ENCODE measurements at regions of chr1 and their contacts with region 1.

Region 1: DNA sequence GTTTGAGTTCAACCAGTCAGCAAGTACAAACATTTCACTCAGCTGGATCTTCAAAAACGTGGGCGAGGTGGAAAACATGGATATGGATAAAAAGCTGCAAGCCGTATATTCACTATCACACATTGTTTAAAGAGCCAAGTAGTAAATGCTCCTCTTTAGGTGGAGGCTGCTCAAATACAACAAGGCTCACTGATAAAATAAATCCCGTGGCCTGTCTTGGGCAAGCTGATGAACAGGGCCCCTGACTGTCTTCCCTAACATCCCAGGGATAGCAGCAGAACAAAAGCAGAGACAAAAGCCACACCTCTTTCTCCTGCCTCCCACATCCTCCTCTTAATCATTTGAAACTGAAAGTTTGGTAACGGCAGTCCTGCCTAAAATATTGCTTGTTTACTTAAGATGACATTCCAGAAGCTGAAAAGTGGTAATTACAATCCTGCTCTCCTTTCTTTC is 357.7 kb downstream of the TTLL7 start:
- DNase-seq: peak in 1 of 2 donors; percentile 22
- ATAC-seq: peak in 6 of 8 donors; percentile 54 to 88 (median 74)
- H3K4me3 ChIP-seq: peak overlapping the region in 3 of 10 donors; percentile 4 to 26 (median 22)
- H3K27ac ChIP-seq: peak overlapping the region in 9 of 10 donors; percentile 5 to 79 (median 37)
- H3K4me1 ChIP-seq: peaks cover 0 to 20% (median 10%) of the 10 kb centered on the region in 9 donors
- H3K27me3 ChIP-seq: no peaks in the 10 kb centered on the region
- CTCF ChIP-seq: no peak

Region 2: DNA sequence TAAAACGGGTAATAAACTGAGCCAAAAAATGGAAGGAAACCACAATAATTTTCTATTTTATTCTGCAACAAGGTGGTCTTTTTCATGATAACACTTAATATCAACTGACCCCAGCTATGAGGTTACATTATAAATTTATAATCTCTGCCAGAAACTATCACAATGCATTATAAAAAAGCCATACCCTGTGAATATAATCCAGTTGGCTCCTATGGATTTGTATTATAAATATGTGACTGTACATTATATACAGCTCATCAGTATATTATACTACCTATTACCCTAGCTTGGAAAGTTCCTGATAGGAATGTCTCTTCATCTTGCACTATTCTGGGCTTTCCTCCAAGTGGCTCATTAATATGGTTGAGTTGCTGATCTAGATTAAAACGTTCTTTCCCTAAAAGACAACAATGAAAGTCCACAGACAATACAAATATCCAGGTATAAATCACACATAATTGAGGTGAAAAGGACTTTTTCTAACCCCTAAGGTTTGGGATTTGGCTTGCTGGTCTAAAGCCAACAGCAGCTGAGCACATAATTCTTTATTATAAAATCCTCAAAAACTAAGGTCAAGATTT is 130.0 kb before region 1 on chr1:
- intact Hi-C with region 1: loop called in 1 of 10 experiments (anchors 5 kb)
- DNase-seq: no peak
- ATAC-seq: no peak
- H3K4me3 ChIP-seq: no peak overlapping the region
- H3K27ac ChIP-seq: peak overlapping the region in 2 of 10 donors; percentile 44 to 76
- H3K4me1 ChIP-seq: peaks cover 3 to 62% (median 35%) of the 10 kb centered on the region in 9 donors
- H3K27me3 ChIP-seq: no peaks in the 10 kb centered on the region
- CTCF ChIP-seq: no peak

Region 3: DNA sequence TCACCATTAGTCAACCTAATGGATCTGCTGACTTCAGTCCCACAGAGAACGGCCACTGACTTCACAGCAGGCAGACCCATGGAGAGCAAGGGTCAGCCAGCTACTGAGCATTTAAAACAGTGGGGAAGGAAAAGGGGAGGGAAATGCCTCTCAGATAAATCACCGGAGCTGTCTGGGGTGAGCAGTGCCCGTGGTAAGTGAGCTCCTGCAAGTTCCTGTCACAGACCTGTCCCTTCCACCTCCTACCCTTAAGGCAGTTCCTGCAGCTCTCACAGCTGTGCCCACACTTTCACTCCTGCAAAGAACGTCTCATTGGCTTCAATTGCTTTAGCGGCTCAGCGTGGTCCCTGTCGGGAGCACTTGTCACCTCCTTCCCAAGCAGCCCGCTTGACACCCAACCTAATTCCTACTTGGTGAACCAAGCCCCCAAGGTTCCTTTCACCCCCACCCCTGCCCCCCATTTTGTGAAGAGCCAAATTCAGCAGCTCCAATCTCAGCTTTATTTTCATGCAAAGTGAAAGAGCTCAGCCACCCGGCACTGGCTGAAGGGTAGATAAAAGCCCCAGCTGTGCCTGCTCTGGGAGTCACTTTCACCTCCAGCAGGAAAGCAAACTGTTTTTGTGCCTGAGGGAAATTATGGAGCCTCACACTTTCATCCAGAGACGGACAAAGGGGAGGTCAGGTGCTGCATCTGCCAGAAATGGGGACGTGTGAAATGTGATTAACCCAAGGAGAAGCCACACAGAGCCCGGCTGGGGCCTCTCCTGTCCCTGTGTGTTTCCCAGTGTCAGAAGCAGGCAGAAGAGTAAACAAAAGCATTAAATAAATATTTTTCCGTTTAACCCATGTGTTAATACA is 51.5 kb after region 1 on chr1:
- intact Hi-C with region 1: loop called in 1 of 10 experiments (anchors 2 kb)
- DNase-seq: peak in 1 of 2 donors; percentile 4
- ATAC-seq: peak; percentile 34 to 81 (median 64)
- H3K4me3 ChIP-seq: peak overlapping the region in 9 of 10 donors; percentile 6 to 50 (median 37)
- H3K27ac ChIP-seq: peak overlapping the region in 6 of 10 donors; percentile 34 to 62 (median 49)
- H3K4me1 ChIP-seq: peaks cover 0 to 26% (median 17%) of the 10 kb centered on the region in 9 donors
- H3K27me3 ChIP-seq: peaks cover 0 to 4% (median 0%) of the 10 kb centered on the region in 7 donors
- CTCF ChIP-seq: no peak

Measured in heart right ventricle (tissue), 16 donors.